Calu3 (cell line): ENCODE measurements at regions of chr3 and their contacts with region 1.

Region 1: DNA sequence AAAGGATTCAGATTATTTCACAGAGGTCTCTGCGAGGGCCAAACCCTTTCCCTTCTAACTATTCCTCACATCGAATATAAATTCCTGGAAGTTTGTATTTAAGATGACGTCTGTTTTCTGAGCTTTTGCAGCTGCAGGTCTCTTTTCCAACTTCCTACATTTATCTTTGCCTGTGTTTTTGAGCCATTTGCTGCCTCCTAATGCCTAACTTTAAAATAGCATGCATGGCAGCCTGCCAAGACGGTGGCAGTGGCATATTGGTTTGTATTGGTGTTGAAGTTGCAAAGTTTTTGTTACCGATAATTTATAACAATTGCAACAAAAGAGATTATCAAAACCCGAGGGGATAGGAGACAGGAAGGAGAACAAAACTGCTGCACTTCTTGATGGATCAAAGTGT is 187.1 kb upstream of the DNAJC19 start:
- DNase-seq: peak; percentile 83
- H3K4me3 Mint-ChIP-seq: no peak overlapping the region
- H3K27ac Mint-ChIP-seq: no peak overlapping the region
- H3K4me1 Mint-ChIP-seq: no peaks in the 10 kb centered on the region
- H3K27me3 Mint-ChIP-seq: peaks cover 12% of the 10 kb centered on the region
- CTCF ChIP-seq: peak; percentile 80

Region 2: DNA sequence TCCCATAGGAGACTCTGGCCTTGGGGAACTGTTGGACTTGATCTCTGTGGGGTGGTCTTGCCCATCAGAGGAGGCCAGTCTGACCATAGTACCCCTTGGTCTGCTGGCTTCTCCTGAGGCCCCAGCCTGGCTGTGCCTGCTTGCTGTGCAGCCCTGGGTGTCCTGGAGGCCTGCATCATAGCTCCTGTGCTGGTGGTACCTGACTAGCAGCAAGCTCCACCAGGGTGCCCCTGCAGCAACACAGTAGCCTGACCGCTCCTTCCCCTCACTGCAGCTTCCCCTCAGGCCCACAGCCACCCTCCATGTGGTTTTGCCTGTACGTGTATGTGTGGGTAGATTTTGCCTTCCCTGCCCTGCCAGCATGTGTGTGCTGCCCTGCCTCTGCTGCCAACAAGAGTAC is 660.2 kb before region 1 on chr3:
- CTCF ChIA-PET with region 1: no interaction called
- intact Hi-C with region 1: no loop called
- DNase-seq: no peak
- H3K4me3 Mint-ChIP-seq: no peak overlapping the region
- H3K27ac Mint-ChIP-seq: no peak overlapping the region
- H3K4me1 Mint-ChIP-seq: peaks cover 9% of the 10 kb centered on the region
- H3K27me3 Mint-ChIP-seq: no peaks in the 10 kb centered on the region
- CTCF ChIP-seq: no peak

Region 3: DNA sequence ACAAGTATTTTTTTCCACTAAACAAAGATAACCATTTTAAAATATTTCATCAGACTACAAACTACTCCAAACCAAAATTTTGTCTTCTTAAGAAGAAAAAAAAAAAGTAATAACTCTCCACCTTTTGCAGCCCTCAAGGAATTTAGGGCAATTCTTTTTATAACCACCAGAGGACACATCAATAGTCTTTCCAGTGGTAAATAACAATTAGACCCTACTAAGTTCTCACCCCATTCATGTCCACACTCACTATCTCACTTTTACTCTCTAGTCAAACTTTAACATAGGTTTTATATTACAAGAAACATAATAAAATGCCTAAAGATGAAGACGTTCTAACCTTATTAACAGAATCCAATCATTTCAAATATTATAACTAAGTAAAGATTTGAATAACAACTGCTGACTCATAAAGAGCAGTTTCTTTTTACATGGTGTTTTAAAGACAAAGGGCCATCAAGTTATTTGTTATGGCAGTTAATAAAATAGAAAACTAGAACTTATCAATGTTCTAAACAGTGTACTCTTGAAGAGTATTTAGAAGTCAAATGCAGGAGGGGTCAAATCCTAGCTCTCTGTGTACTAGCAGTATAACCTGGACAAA is 530.3 kb before region 1 on chr3:
- CTCF ChIA-PET with region 1: no interaction called
- intact Hi-C with region 1: loop called (anchors 10 kb)
- DNase-seq: no peak
- H3K4me3 Mint-ChIP-seq: no peak overlapping the region
- H3K27ac Mint-ChIP-seq: no peak overlapping the region
- H3K4me1 Mint-ChIP-seq: no peaks in the 10 kb centered on the region
- H3K27me3 Mint-ChIP-seq: no peaks in the 10 kb centered on the region
- CTCF ChIP-seq: peak; percentile 52

Region 4: GRCh38 chr3:180690061-180690460 is 486.5 kb before region 1 on chr3:
- CTCF ChIA-PET with region 1: no interaction called
- intact Hi-C with region 1: loop called (anchors 5 kb)
- DNase-seq: no peak
- H3K4me3 Mint-ChIP-seq: no peak overlapping the region
- H3K27ac Mint-ChIP-seq: no peak overlapping the region
- H3K4me1 Mint-ChIP-seq: no peaks in the 10 kb centered on the region
- H3K27me3 Mint-ChIP-seq: peaks cover 33% of the 10 kb centered on the region
- CTCF ChIP-seq: no peak

Region 5: DNA sequence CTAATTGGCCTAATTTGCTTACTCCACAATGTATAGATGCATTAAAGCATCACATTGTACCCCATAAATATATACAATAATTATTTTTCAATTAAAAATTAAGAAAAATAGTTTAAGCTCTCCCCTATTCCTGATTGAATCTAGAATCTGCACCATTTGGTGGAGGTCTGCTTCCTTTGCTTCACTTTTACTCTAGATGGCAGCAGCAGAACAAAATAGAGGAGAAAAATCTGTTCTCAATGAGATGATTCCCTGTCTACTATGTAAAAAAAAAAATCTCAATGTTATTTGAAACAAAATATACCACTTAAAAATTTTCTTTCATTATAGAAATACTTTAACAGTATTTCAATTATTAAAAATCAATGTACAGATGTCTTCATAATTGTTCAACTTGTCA is 373.8 kb before region 1 on chr3:
- CTCF ChIA-PET with region 1: no interaction called
- intact Hi-C with region 1: loop called (anchors 1 kb)
- DNase-seq: peak; percentile 20
- H3K4me3 Mint-ChIP-seq: no peak overlapping the region
- H3K27ac Mint-ChIP-seq: no peak overlapping the region
- H3K4me1 Mint-ChIP-seq: no peaks in the 10 kb centered on the region
- H3K27me3 Mint-ChIP-seq: no peaks in the 10 kb centered on the region
- CTCF ChIP-seq: peak; percentile 59

Region 6: GRCh38 chr3:180989291-180990163 is 187.1 kb before region 1 on chr3 and contains the start of gene DNAJC19:
- CTCF ChIA-PET with region 1: no interaction called
- intact Hi-C with region 1: loop called (anchors 5 kb)
- DNase-seq: peak; percentile 97
- H3K4me3 Mint-ChIP-seq: peak within 1 kb of the TSS; percentile 99
- H3K27ac Mint-ChIP-seq: peak within 1 kb of the TSS; percentile 96
- H3K4me1 Mint-ChIP-seq: peaks cover 11% of the 10 kb centered on the region
- H3K27me3 Mint-ChIP-seq: peaks cover 30% of the 10 kb centered on the region
- CTCF ChIP-seq: no peak
- total RNA-seq, gene DNAJC19: 90.0 and 92.9 TPM in 2 replicates

Region 7: DNA sequence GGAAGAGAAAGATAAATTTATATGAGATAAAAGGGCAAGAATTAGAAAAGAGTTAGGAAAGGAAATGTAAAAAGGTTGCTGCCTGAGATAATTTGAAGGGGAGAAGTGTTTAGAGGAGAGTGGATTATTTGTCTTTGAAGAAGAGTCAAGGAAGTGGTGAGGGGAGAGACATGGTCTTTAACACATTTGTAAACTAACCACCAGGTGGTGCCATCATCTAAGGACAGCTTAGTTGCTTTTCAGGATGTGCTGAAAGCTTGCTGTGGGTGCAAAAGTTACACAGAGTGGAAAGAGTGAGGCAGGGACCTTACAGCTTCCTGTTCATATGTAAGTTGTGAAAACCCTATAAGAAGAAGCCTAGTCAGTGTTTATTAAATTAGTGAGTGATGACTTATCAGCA is 73.0 kb before region 1 on chr3:
- CTCF ChIA-PET with region 1: interaction called, 3 read pairs
- intact Hi-C with region 1: loop called (anchors 2 kb)
- DNase-seq: peak; percentile 46
- H3K4me3 Mint-ChIP-seq: no peak overlapping the region
- H3K27ac Mint-ChIP-seq: no peak overlapping the region
- H3K4me1 Mint-ChIP-seq: no peaks in the 10 kb centered on the region
- H3K27me3 Mint-ChIP-seq: peaks cover 14% of the 10 kb centered on the region
- CTCF ChIP-seq: peak; percentile 67

Region 8: GRCh38 chr3:181486141-181486885 is 309.7 kb after region 1 on chr3:
- CTCF ChIA-PET with region 1: no interaction called
- intact Hi-C with region 1: no loop called
- DNase-seq: no peak
- H3K4me3 Mint-ChIP-seq: no peak overlapping the region
- H3K27ac Mint-ChIP-seq: no peak overlapping the region
- H3K4me1 Mint-ChIP-seq: no peaks in the 10 kb centered on the region
- H3K27me3 Mint-ChIP-seq: no peaks in the 10 kb centered on the region
- CTCF ChIP-seq: no peak